ENCODE measurements at regions of chr13 and their contacts with region 1.

Region 1: DNA sequence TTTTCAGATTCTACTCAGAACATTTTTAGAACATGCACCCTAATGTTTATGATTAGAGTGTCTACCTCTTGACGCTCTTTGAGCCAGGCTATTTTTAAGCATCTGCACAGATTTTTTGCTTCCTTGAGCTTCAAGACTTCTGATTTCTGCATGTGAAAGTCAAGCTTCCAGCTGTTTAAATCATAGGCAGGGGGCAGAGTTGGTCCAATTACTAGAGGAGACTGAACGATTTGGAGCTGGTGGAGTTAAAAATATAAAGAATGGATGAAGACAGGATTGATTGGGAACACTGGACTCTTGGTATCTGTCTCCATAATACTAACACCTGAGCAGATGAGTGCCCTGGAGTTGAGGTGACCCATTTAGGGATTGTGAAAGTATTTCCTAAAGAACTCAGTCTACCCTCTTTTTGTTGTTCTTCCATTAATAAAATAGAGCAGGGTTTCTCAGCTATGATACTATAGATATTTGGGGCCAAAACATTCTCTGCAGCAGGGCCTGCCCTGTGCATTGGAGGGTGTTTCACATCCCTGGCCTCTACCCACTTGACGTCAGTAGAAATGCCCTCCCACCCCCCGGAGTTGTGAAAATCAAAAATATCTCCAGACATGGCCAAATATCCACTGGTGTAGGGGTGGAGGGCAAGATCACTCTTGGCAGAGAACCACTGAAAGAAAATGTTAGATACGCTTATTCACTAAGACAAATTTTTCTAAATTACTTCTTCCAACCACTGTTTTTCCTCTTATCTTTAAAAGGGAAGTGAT is 160.1 kb downstream of the COG6 start:
- DNase-seq: no peak
- H3K4me3 ChIP-seq: no peak overlapping the region
- H3K27ac ChIP-seq: no peak overlapping the region
- H3K4me1 ChIP-seq: peaks cover 18% of the 10 kb centered on the region
- H3K27me3 ChIP-seq: no peaks in the 10 kb centered on the region
- CTCF ChIP-seq: 0 out of 2 replicates have a peak, but pooled peaks have one; percentile 25

Region 2: DNA sequence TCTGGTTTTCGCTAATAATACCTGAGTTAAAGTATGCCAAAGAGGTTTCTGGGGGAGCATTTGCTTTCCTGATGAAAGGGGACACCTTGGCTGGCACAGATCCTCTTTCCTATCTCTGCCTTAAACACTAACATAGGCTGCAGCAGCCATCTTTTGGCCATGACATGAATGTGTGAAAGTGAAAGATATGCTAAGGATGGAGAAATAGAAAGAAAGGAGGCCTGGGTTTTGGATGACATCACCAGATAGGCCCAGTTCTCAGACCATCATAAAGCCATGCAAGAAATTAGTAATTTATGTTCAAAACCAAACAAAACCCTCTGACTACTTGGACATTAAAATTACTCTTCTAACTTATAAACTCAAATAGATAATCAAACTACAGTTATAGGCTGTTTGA is 119.6 kb after region 1 on chr13:
- CTCF ChIA-PET with region 1: no interaction called
- POLR2A ChIA-PET with region 1: no interaction called
- intact Hi-C with region 1: loop called (anchors 10 kb)
- DNase-seq: no peak
- H3K4me3 ChIP-seq: no peak overlapping the region
- H3K27ac ChIP-seq: no peak overlapping the region
- H3K4me1 ChIP-seq: peaks cover 22% of the 10 kb centered on the region
- H3K27me3 ChIP-seq: no peaks in the 10 kb centered on the region
- CTCF ChIP-seq: no peak

Region 3: DNA sequence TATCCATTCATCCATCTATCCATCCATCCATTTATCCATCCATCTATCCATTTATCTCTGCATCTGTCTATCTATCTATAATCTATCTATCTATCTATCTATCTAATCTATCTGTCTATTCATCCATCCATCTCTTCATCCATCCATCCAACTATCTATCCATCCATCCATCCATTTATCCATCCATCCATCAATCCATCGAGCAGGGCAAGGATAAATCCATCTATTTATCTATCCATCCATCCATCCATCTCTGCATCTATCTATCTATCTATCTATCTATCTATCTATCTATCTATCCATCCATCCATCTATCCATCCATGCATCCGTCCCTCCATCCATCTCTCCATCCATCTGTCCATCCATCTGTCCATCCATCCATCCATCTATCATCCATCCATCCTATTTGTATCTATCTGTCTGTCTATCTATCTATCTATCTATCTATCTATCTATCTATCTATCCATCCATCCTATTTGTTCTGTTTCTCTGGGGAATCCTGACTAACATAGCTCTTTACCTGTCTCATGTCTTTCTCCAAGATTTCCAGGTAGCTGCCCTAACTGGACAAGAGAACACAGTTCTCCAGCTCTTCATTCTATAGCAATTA is 652.8 kb after region 1 on chr13:
- CTCF ChIA-PET with region 1: no interaction called
- POLR2A ChIA-PET with region 1: interaction called, 11 read pairs
- intact Hi-C with region 1: no loop called
- DNase-seq: no peak
- H3K4me3 ChIP-seq: no peak overlapping the region
- H3K27ac ChIP-seq: no peak overlapping the region
- H3K4me1 ChIP-seq: no peaks in the 10 kb centered on the region
- H3K27me3 ChIP-seq: no peaks in the 10 kb centered on the region
- CTCF ChIP-seq: no peak